Dorsolateral prefrontal cortex (tissue), 120 donors: ENCODE measurements at regions of chr1 and their contacts with region 1.

Region 1: DNA sequence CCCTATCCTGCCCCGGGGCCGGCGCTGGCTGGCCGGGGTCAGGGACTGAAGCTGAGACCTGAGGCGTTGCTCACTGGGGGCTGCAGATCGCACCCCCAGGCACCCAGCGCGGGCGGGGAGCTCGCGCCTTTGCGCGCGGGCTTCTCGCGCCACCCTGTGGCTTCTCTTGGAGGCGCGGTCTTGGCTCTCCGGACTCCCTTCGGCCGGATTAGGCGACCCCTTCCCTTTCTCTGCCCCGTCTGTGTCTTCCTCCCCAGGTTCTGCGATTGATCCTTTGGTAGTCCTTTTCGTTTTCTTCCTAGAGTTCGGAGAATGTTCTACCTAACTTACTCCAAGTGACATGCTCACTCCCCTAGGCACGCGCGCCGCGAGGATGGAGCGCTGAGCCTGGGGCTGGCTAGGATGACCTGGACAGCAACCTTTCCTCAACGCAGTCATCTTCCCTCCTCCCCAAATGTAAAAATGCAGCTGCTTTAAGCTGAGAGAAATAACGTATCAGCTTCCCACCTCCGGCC is 495 bp upstream of the NTRK1 start:
- DNase-seq: peak in 6 of 10 donors; percentile 18 to 72 (median 36)
- H3K4me3 ChIP-seq: peak overlapping the region; percentile 15 to 69 (median 48)
- H3K27ac ChIP-seq: peak overlapping the region in 1 of 59 donors; percentile 6
- H3K27me3 ChIP-seq: peaks cover 0 to 65% (median 39%) of the 10 kb centered on the region in 45 donors
- CTCF ChIP-seq: peak; percentile 40 to 89 (median 78)

Region 2: DNA sequence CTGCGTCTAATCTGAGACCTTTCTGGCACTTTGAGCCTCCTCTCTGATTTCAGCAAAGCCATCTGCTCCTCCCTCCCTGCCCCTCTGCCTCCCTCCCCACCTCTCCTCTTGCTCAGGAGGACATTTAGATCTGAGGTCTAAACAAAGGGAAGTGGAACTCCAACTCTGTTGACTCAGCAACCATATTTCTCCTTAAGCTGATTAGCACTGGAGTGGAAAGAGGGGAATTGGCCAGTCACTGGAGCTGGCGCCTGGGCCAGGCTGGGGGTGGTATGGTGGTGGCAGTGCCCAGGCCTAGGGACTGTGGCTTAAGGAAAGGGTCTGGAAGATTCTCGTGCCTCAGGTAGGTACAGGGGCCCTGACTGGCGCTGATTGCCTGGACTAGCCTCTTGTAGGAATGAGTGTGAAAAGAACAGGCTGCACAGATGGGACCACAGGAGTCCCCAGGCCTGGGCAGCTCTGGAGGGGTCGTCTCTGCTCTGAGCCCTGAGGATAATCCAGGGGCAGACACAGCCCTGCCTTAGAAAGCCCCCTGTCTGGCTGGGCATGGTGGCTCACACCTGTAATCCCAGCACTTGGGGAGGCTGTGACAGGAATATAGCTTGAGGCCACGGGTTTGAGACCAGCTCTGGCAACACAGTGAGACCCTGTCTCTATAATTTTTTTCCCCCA is 55.5 kb before region 1 on chr1:
- intact Hi-C with region 1: loop called in 1 of 2 experiments (anchors 5 kb)
- DNase-seq: peak in 2 of 10 donors; percentile 31 to 42
- H3K4me3 ChIP-seq: no peak overlapping the region
- H3K27ac ChIP-seq: peak overlapping the region in 12 of 59 donors; percentile 1 to 61 (median 28)
- H3K27me3 ChIP-seq: no peaks in the 10 kb centered on the region
- CTCF ChIP-seq: no peak

Region 3: DNA sequence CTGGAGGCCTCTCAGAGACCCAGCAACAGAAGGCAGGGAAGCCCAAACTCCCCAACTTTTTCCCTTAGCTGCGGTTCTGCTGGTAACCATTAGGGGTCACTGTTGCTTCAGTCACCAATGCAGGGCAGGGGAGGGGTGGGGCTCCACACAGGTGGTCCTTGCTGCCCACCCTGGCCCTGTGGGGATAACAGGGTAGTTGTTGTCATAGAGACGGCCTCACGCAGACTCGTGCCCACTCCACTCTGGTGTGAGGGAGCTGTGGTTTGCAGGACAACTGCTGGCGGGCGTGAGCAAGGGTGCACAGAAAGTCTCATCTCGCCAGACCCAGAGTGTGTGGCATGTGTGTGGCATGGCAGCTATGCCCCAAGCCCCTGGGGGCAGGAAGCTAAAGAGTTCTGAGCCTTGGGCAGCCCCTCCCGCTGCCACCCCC is 21.2 kb before region 1 on chr1:
- intact Hi-C with region 1: loop called in 1 of 2 experiments (anchors 2 kb)
- DNase-seq: no peak
- H3K4me3 ChIP-seq: no peak overlapping the region
- H3K27ac ChIP-seq: no peak overlapping the region
- H3K27me3 ChIP-seq: peaks cover 0 to 67% (median 24%) of the 10 kb centered on the region in 45 donors
- CTCF ChIP-seq: peak; percentile 42 to 90 (median 78)

Region 4: GRCh38 chr1:156959414-156959813 is 99.2 kb after region 1 on chr1:
- intact Hi-C with region 1: no loop called
- DNase-seq: no peak
- H3K4me3 ChIP-seq: no peak overlapping the region
- H3K27ac ChIP-seq: peak overlapping the region in 3 of 59 donors; percentile 13 to 26 (median 17)
- H3K27me3 ChIP-seq: no peaks in the 10 kb centered on the region
- CTCF ChIP-seq: no peak

Region 5: DNA sequence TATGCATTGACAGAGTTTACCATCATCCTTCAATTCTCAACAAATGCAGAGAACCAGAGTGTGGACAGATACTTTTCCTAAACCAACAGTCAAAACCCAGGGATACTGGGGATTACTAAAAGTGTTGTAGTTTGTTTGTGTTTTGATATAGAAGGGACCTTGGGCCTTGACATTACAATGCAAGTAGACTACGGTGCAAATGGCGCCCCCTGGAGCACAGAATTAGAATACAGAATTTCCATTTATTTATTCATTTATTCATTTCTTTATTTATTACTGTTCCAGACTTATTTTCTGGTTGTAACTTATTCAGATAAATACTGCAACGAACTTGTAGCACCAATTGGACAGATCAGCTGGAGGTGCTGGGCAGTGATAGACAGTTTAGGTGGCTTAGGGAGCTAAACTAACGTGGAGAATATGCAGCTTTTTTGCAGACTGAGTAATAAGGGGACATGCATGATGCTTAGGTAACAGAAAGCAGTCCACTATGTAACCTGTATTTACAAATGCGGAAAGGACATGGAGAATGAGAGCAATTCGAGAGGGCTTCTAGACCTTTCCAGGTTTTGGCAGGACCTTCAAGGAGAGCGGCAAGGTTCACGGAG is 1175.9 kb after region 1 on chr1:
- intact Hi-C with region 1: no loop called
- DNase-seq: no peak
- H3K4me3 ChIP-seq: no peak overlapping the region
- H3K27ac ChIP-seq: no peak overlapping the region
- H3K27me3 ChIP-seq: peaks cover 0 to 13% (median 0%) of the 10 kb centered on the region in 45 donors
- CTCF ChIP-seq: peak in 54 of 56 donors; percentile 42 to 78 (median 64)